Gastrocnemius medialis (tissue), 4 donors: ENCODE measurements at regions of chr14 and their contacts with region 1.

Region 1: GRCh38 chr14:24188251-24189058 is at the start of gene IPO4:
- DNase-seq: peak; percentile 96 to 97
- ATAC-seq: peak; percentile 99
- H3K4me3 ChIP-seq: peak within 1 kb of the TSS; percentile 62 to 84 (median 82)
- H3K27ac ChIP-seq: peak within 1 kb of the TSS; percentile 83 to 90 (median 86)
- H3K4me1 ChIP-seq: peaks cover 12 to 16% of the 10 kb centered on the region in 2 donors
- H3K27me3 ChIP-seq: no peaks in the 10 kb centered on the region
- CTCF ChIP-seq: no peak
- POLR2A ChIP-seq: peak; percentile 86
- total RNA-seq, gene IPO4: 35.7 to 73.2 (median 55.4) TPM

Region 2: DNA sequence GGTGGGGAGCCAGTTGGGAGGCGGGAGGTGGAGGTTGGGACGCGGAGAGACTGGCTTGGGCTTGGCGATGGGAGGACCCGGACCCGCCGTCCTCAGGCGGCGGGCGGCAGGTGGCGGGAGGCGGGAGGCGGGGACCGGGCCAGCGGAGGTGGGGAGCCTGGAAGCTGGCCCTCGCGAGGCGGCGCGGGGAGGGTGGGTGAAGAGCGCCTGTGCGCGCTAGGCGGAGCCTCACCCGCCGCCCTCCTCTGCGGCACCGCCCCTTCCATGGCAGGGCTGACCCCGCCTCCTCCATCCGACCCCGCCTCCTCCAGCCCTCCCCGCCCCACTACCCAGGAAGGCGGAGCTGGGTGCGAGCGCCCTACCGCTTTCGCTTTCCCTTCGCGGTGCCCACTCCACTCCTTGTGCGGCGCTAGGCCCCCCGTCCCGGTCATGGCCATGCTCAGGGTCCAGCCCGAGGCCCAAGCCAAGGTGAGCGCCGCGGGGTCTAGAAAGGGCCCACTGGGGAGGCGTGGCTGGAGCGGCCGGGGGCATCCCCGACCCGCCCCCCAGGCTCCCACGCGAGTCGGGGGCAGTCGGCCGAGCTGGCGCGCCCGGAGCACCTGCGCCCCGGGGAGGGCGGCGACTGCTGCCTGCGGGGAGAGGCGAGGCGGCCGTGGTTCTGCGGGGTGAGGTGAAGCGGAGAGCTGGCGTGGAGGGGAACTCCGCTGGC is 52.5 kb before region 1 on chr14 and contains the start of gene PSME1:
- in situ Hi-C with region 1: no loop called
- intact Hi-C with region 1: no loop called
- DNase-seq: peak; percentile 89 to 94
- ATAC-seq: peak; percentile 53 to 75
- H3K4me3 ChIP-seq: peak within 1 kb of the TSS; percentile 86 to 100 (median 92)
- H3K27ac ChIP-seq: peak within 1 kb of the TSS; percentile 92 to 99 (median 96)
- H3K4me1 ChIP-seq: peaks cover 48 to 67% of the 10 kb centered on the region in 2 donors
- H3K27me3 ChIP-seq: no peaks in the 10 kb centered on the region
- CTCF ChIP-seq: peak in 1 of 5 experiments; percentile 18
- POLR2A ChIP-seq: peak; percentile 71 to 74
- total RNA-seq, gene PSME1: 63.3 to 158 (median 87.5) TPM

Region 3: DNA sequence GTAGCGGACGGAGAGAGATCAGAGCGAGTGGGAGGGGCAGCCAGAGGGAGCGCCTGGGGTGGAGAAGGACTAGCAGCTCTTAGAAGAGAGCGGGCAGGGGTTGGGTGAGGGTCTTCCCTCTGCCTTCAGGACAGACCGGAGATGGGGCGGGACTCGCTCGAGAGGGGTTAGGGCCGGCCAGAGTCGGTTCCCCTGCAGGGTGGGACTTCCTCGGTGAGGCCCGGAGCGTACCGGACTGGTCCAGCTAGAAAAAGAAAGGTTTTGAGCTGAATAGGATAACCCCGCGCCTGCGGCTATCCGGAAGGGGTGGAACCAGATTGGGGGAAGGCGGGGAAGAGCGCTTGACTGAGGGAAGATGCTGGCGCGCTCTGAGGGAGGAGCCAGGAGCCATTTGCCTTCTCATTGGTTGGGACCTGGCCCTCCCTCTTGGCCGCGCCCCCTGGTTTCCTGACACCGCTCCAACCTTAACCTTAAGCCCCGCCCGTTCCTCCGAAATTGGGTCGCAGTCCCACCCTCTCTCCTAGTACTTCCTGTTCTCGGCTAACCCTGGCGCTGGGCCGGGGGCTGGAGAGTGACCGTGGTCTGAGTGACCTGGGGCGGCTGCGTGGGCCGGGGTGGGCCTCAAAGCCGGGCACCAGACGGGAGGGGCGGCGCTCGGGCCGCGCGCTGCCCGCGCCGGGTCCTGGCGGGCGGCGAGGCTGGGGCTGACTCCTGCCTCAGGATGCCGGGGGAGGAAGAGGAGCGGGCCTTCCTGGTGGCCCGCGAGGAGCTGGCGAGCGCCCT is 41.3 kb before region 1 on chr14 and contains the start of gene RNF31:
- in situ Hi-C with region 1: no loop called
- intact Hi-C with region 1: loop called (anchors 1 kb)
- DNase-seq: peak; percentile 98 to 99
- ATAC-seq: peak; percentile 89 to 94
- H3K4me3 ChIP-seq: peak within 1 kb of the TSS; percentile 75 to 92 (median 84)
- H3K27ac ChIP-seq: peak within 1 kb of the TSS; percentile 92 to 97 (median 92)
- H3K4me1 ChIP-seq: peaks cover 21% of the 10 kb centered on the region in 2 donors
- H3K27me3 ChIP-seq: no peaks in the 10 kb centered on the region
- CTCF ChIP-seq: no peak
- POLR2A ChIP-seq: peak; percentile 72 to 82
- total RNA-seq, gene RNF31: 63.3 to 140 (median 82.4) TPM